Lower leg skin (tissue), 4 donors: ENCODE measurements at regions of chr12 and their contacts with region 1.

Region 1: GRCh38 chr12:11321980-11322379 is 11.7 kb upstream of the PRB4 start:
- DNase-seq: no peak
- H3K4me3 ChIP-seq: no peak overlapping the region
- CTCF ChIP-seq: no peak
- POLR2A ChIP-seq: no peak

Region 2: DNA sequence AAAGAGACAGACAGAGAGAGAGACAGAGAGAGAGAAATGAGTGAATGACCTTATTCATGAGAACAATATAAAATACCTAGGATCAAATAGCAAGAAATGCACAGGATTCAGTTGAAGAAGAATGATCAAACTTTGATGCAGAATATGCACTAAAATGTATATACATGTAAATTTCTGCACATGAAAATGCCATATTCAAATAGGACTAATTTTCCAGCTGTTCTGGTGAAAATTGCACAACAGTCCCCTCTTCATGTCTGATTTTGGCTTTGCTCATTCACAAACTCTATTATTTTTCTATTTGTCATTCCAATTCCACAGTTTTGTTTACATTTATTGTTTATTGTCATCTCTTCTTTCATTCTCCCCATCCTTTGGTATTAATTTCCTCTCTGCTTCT is 39.2 kb after region 1 on chr12:
- intact Hi-C with region 1: no loop called
- DNase-seq: no peak
- H3K4me3 ChIP-seq: no peak overlapping the region
- CTCF ChIP-seq: no peak
- POLR2A ChIP-seq: no peak

Region 3: DNA sequence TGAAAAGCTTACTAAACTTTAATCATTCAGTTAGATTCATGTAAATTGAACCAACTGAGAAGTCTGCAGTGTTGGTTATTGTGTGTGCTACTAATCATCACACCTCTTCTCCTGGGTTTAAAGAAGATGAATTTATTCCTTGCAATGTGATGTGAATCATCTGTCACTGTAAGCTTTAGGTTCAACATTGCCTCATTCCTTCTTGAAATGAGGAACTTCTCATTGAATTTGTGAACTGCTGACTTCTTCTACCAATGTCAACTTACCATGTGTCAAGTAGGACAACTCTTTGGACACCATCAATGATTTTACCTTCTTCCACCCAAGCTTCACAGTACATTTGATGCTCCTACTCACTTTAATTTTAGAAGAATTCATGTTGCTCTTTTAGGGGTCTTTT is 90.8 kb after region 1 on chr12:
- intact Hi-C with region 1: loop called (anchors 5 kb)
- DNase-seq: no peak
- H3K4me3 ChIP-seq: no peak overlapping the region
- CTCF ChIP-seq: no peak
- POLR2A ChIP-seq: no peak